SK-N-SH (cell line): ENCODE measurements at regions of chr9 and their contacts with region 1.

Region 1: GRCh38 chr9:91659529-91660495 is 236.2 kb upstream of the NFIL3 start:
- DNase-seq: peak; percentile 71
- H3K4me3 ChIP-seq: no peak overlapping the region
- H3K27ac ChIP-seq: no peak overlapping the region
- H3K4me1 ChIP-seq: peaks cover 0 to 4% of the 10 kb centered on the region in 2 experiments; a peak in 2 of 4 replicates
- H3K27me3 ChIP-seq: no peaks in the 10 kb centered on the region; the same call in 1 of the 2 replicates
- CTCF ChIP-seq: peak; percentile 46
- EP300 ChIP-seq: no peak
- RAD21 ChIP-seq: peak; percentile 83

Region 2: GRCh38 chr9:91676046-91676445 is 16.2 kb after region 1 on chr9:
- CTCF ChIA-PET with region 1: interaction called, 13 read pairs
- POLR2A ChIA-PET with region 1: interaction called, 3 read pairs
- DNase-seq: no peak
- H3K4me3 ChIP-seq: no peak overlapping the region
- H3K27ac ChIP-seq: no peak overlapping the region
- H3K4me1 ChIP-seq: peaks cover 0 to 2% of the 10 kb centered on the region in 2 experiments; a peak in 1 of 4 replicates
- H3K27me3 ChIP-seq: no peaks in the 10 kb centered on the region
- CTCF ChIP-seq: peak; percentile 44
- EP300 ChIP-seq: no peak
- RAD21 ChIP-seq: peak; percentile 46

Region 3: GRCh38 chr9:91681461-91682305 is 21.9 kb after region 1 on chr9:
- CTCF ChIA-PET with region 1: interaction called, 11 read pairs
- POLR2A ChIA-PET with region 1: no interaction called
- DNase-seq: peak; percentile 92
- H3K4me3 ChIP-seq: peak overlapping the region in 1 of 2 experiments; percentile 47; a peak in 2 of 4 replicates
- H3K27ac ChIP-seq: no peak overlapping the region
- H3K4me1 ChIP-seq: peaks cover 0 to 2% of the 10 kb centered on the region in 2 experiments; a peak in 1 of 4 replicates
- H3K27me3 ChIP-seq: no peaks in the 10 kb centered on the region
- CTCF ChIP-seq: peak; percentile 89
- EP300 ChIP-seq: no peak
- RAD21 ChIP-seq: peak; percentile 86

Region 4: GRCh38 chr9:91720751-91721705 is 61.2 kb after region 1 on chr9:
- CTCF ChIA-PET with region 1: interaction called, 10 read pairs
- POLR2A ChIA-PET with region 1: no interaction called
- DNase-seq: peak; percentile 53
- H3K4me3 ChIP-seq: no peak overlapping the region
- H3K27ac ChIP-seq: no peak overlapping the region
- H3K4me1 ChIP-seq: no peaks in the 10 kb centered on the region; a peak in 1 of 4 replicates
- H3K27me3 ChIP-seq: no peaks in the 10 kb centered on the region
- CTCF ChIP-seq: no peak
- EP300 ChIP-seq: no peak
- RAD21 ChIP-seq: no peak

Region 5: GRCh38 chr9:91727316-91727861 is 67.6 kb after region 1 on chr9:
- CTCF ChIA-PET with region 1: interaction called, 38 read pairs
- POLR2A ChIA-PET with region 1: no interaction called
- DNase-seq: peak; percentile 88
- H3K4me3 ChIP-seq: no peak overlapping the region; a peak in 1 of 4 replicates
- H3K27ac ChIP-seq: no peak overlapping the region
- H3K4me1 ChIP-seq: peaks cover 0 to 6% of the 10 kb centered on the region in 2 experiments; a peak in 1 of 4 replicates
- H3K27me3 ChIP-seq: no peaks in the 10 kb centered on the region; the same call in 1 of the 2 replicates
- CTCF ChIP-seq: peak; percentile 80
- EP300 ChIP-seq: no peak
- RAD21 ChIP-seq: peak; percentile 82